Dorsolateral prefrontal cortex (tissue), 120 donors: ENCODE measurements at regions of chr16 and their contacts with region 1.

Region 1: DNA sequence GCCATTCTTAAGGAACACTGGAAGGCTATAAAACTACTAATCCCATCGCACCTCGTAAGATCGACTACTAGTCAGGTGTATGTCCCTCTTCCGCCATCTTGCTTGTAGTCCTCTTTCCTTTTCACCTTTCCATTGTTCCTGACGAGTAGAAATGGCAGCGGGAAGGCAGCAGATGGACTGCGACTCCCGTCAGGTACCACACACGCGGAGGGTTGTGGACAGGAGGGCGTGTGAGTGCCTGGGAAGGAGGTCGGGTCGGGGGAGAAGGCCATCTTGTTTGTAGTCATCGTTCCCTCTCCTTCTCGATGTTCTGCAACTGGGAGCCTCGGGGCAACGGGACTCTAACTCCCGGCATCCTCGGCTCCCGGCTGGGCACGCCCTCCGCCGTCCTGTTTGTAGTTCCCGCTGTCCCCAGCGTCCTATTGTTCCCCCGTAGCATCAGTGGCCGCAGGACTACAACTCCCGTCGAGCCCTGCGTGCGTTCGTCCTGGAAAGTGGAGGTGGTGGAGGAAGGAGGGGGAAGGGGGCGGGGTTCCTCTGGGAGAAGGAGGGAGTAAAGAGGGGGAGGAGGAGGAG is 324 bp upstream of the FBXL19 start:
- DNase-seq: peak; percentile 98 to 100 (median 100)
- H3K4me3 ChIP-seq: peak overlapping the region; percentile 47 to 88 (median 75)
- H3K27ac ChIP-seq: peak overlapping the region; percentile 93 to 100 (median 98)
- H3K27me3 ChIP-seq: no peaks in the 10 kb centered on the region
- CTCF ChIP-seq: peak in 1 of 56 donors; percentile 1

Region 2: DNA sequence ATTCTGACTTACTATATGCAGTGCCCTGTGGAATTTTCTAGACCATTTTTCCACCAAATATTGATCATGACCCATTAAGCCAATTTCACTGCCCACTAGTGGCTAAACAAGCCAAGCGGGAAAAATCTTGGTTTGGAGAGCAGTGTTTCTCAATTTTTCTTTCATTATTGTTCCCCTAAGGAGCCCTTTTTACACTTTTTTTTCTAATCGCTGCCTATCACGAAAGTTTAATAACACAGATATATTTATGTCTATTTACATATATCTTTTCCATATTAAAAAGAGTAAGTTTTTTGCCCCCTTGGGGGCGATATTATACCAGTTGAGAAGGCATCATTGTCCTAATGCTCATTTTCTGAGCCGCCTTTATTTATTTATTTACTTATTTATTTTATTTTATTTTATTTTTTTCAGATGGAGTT is 881.2 kb before region 1 on chr16:
- intact Hi-C with region 1: no loop called
- DNase-seq: no peak
- H3K4me3 ChIP-seq: no peak overlapping the region
- H3K27ac ChIP-seq: no peak overlapping the region
- H3K27me3 ChIP-seq: no peaks in the 10 kb centered on the region
- CTCF ChIP-seq: peak in 54 of 56 donors; percentile 25 to 72 (median 54)

Region 3: DNA sequence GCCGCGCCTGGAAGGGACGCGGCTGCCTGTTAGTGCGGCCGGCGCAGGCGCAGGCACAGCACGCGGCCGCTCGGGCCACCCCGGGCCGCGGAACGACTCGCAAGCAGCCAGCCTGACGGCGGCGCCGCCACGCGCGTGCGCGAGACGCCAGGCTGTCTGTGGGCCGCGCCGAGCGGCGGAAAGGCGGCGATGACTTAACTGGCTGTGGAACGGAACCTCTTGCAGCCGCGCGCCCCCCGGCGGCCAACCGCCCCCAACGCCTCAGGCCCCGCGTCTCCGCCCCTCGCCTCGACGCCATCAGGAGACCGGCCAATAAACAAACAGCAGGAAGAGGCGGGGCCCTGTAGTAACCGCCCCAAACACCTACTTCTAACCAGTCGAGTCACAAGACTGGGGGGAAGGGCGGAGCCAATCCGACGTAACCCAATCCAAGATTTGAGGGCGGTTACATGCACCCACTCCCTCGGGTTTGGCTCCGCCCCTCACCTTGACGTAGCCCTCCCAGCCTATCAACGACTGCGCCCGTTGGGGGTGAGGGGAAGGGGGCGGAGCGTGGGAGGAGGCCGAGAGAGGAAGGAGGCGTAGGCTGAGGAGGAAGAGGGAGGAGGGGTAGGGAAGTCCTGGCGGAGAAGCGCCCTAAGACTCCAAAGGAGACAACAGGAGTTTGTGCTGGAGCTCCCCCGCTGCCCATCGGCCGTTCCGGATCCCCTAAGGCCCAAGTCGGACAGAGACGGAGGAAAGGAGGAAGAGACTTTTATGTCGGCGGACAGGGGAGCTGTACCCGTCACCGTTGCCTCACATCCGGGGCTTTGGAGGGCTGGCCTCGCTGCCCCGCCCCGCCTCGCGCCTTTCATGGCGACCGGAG is 264.9 kb before region 1 on chr16 and contains the start of gene FBRS:
- intact Hi-C with region 1: loop called in 1 of 2 experiments (anchors 5 kb)
- DNase-seq: peak; percentile 99 to 100 (median 100)
- H3K4me3 ChIP-seq: peak within 1 kb of the TSS; percentile 63 to 97 (median 88)
- H3K27ac ChIP-seq: peak within 1 kb of the TSS; percentile 93 to 100 (median 100)
- H3K27me3 ChIP-seq: no peaks in the 10 kb centered on the region
- CTCF ChIP-seq: peak; percentile 57 to 96 (median 88)
- total RNA-seq, gene FBRS: 39.8 to 86.3 (median 56.3) TPM

Region 4: GRCh38 chr16:30761928-30762810 is 160.9 kb before region 1 on chr16 and contains the starts of genes CFAP119 and RNF40:
- intact Hi-C with region 1: loop called in 1 of 2 experiments (anchors 5 kb)
- DNase-seq: peak; percentile 92 to 98 (median 97)
- H3K4me3 ChIP-seq: peak within 1 kb of the TSS; percentile 66 to 99 (median 90)
- H3K27ac ChIP-seq: peak within 1 kb of the TSS in 58 of 59 donors; percentile 36 to 96 (median 86)
- H3K27me3 ChIP-seq: no peaks in the 10 kb centered on the region
- CTCF ChIP-seq: peak in 33 of 56 donors; percentile 4 to 48 (median 22)
- total RNA-seq, gene CFAP119: 3.6 to 27.3 (median 12.7) TPM
- total RNA-seq, gene RNF40: 72.0 to 128 (median 95.4) TPM

Region 5: DNA sequence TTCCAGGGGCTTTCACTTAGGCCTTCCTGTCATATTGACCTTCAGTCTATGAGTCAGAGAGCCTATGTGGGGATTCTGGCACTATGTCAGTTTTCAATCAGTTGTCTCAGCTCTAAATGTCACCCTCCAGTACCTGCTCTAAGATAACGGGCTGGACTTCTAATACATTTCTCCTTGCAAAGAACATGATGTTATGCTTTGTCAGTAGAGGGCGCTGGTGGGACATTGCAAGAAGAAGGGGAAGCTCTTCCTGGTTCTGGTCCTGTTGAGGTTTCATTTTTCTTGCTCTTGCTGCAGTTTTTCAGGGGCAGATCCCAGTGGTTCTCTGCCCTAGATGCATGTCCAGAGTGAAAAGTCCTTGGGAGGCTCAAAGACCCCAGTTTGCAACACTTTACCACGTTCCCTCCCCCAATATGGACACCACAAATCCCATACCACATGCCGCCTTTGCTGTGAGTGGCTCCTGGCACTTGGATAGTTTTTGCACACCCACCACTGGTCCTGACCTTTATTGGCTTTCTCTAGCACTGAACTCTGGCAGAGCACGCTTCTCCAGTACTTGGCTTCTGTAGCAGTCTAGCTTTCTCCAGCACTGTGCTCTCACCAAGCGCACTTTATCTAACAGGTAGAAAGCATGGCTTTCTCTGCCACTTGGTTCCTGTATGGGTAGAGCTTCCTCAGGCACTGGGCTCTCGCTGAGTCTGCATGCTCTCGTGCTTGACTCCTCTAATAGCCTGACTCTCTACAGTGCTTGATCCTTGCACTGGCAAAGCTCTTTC is 78.2 kb before region 1 on chr16:
- intact Hi-C with region 1: loop called (anchors 1 to 2 kb)
- DNase-seq: peak in 4 of 10 donors; percentile 30 to 59 (median 48)
- H3K4me3 ChIP-seq: peak overlapping the region in 24 of 59 donors; percentile 2 to 34 (median 24)
- H3K27ac ChIP-seq: peak overlapping the region in 32 of 59 donors; percentile 4 to 79 (median 53)
- H3K27me3 ChIP-seq: no peaks in the 10 kb centered on the region
- CTCF ChIP-seq: peak; percentile 42 to 89 (median 80)

Region 6: DNA sequence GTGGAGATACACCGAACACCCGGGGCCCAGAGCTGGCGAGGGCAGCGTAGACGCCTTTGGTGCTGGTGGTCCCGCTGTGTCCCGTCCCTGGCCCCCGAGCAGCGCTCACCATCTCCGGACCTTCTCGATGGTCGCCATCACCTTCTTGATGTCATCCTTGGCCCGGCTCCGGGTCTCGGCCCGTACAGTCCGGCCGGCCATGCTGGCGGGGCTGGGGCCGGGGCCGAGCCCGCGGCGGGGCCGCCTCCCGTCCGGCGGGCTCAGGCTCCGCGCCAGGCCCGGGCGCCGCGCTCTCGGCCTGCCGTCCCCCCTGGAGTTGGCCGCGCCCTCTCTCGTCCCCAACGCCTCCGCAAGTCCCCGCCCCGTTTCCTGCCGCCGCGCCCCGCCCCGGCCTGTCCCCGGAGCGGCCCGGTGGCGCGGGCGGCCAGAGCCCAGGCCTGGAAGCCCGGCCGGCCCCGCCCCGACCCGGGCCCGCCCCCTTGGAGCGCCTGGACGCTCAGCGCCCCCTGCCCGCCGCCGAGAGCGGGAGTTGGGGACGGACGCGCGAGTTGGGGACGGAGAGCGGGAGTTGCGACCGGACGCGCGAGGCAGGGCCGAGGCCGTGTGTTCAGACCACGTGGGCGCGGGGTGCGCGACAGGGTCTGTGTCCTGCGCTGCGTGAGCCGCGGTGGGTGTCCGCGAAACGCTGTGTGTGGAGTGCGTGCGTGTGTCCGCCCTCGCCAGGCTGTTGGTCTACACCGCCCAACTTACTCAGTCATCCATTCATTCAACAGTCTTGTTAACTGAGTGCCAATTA is 29.1 kb before region 1 on chr16 and contains the start of gene BCL7C:
- intact Hi-C with region 1: loop called (anchors 2 kb)
- DNase-seq: peak; percentile 60 to 89 (median 77)
- H3K4me3 ChIP-seq: peak within 1 kb of the TSS; percentile 55 to 93 (median 80)
- H3K27ac ChIP-seq: peak within 1 kb of the TSS; percentile 66 to 97 (median 91)
- H3K27me3 ChIP-seq: no peaks in the 10 kb centered on the region
- CTCF ChIP-seq: peak in 51 of 56 donors; percentile 18 to 79 (median 55)
- total RNA-seq, gene BCL7C: 8.8 to 28.1 (median 15.6) TPM

Region 7: GRCh38 chr16:30957456-30958174 is 34.6 kb after region 1 on chr16 and contains the start of gene SETD1A:
- intact Hi-C with region 1: loop called in 1 of 2 experiments (anchors 2 kb)
- DNase-seq: peak; percentile 93 to 99 (median 96)
- H3K4me3 ChIP-seq: peak within 1 kb of the TSS; percentile 58 to 96 (median 84)
- H3K27ac ChIP-seq: peak within 1 kb of the TSS; percentile 77 to 99 (median 98)
- H3K27me3 ChIP-seq: no peaks in the 10 kb centered on the region
- CTCF ChIP-seq: peak in 18 of 56 donors; percentile 1 to 49 (median 12)
- total RNA-seq, gene SETD1A: 13.3 to 28.5 (median 17.9) TPM